Right cardiac atrium (tissue), 5 donors: ENCODE measurements at regions of chr2 and their contacts with region 1.

Region 1: GRCh38 chr2:241217320-241218031 is 29.0 kb downstream of the ANO7 start:
- DNase-seq: peak; percentile 71 to 91 (median 88)
- ATAC-seq: peak; percentile 83 to 85
- H3K4me3 ChIP-seq: peak overlapping the region; percentile 19
- H3K27ac ChIP-seq: peak overlapping the region; percentile 39
- H3K4me1 ChIP-seq: no peaks in the 10 kb centered on the region
- H3K27me3 ChIP-seq: no peaks in the 10 kb centered on the region

Region 2: DNA sequence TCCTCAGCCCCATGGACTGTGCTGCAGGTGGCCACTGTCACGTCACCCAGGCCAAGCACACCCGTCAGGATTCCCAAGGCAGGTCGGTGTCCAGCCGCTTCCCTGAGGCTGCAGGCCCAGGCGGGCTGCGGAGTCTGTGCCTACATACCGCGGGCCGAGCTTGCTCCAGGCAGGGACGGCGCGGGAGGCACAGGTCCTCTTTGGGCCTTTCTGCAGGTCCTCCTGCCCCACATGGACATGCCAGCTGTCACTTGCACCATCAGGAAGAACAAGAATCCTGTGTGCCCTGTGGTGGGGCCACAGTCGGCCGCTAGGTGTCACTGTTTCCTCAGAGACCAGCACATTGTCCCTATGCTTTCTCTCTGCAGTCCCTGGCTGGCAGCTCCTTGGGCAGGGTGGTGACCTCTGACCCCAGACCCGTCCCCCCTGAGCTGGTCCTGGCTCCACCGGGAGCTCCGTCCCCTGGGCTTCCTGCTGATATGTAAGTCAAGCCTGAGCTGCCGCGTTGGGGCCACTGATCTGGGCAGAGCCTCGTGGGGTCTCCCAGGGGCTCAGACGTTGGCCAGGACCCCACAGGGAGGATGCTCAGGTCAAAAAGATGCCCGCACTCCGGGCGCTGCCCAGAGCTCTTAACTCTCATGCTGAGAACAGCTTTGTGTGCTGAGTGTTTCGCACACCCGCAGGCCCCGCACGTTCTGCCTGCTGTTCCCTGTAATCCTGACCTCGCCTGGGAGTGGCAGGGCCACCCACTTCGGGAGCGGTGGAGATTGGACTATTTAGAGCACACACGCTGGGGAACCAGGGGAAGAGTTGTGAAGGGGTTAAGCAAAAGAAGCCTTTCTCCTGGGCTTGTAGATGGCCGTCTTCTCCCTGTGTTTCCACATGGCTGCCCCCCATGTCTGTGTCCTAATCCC is 366.1 kb before region 1 on chr2:
- intact Hi-C with region 1: loop called in 1 of 4 experiments (anchors 10 kb)
- DNase-seq: peak; percentile 83 to 95 (median 91)
- ATAC-seq: peak; percentile 90 to 92
- H3K4me3 ChIP-seq: no peak overlapping the region
- H3K27ac ChIP-seq: no peak overlapping the region
- H3K4me1 ChIP-seq: no peaks in the 10 kb centered on the region
- H3K27me3 ChIP-seq: no peaks in the 10 kb centered on the region

Region 3: GRCh38 chr2:241102239-241102803 is 115.2 kb before region 1 on chr2 and contains the start of gene MTERF4:
- intact Hi-C with region 1: loop called in 1 of 4 experiments (anchors 10 kb)
- DNase-seq: peak; percentile 86 to 95 (median 94)
- ATAC-seq: peak; percentile 98 to 99
- H3K4me3 ChIP-seq: peak within 1 kb of the TSS; percentile 69
- H3K27ac ChIP-seq: peak within 1 kb of the TSS; percentile 40
- H3K4me1 ChIP-seq: peaks cover 7% of the 10 kb centered on the region
- H3K27me3 ChIP-seq: no peaks in the 10 kb centered on the region
- total RNA-seq, gene MTERF4: 17.6 to 23.2 (median 20.4) TPM